Aorta (tissue), 5 donors: ENCODE measurements at regions of chr22 and their contacts with region 1.

Region 1: GRCh38 chr22:37686002-37686982 is at the start of gene NOL12:
- DNase-seq: peak; percentile 88 to 93
- ATAC-seq: peak; percentile 94
- H3K4me3 ChIP-seq: peak within 1 kb of the TSS; percentile 55 to 58
- H3K27ac ChIP-seq: peak within 1 kb of the TSS in 1 of 2 donors; percentile 46
- H3K4me1 ChIP-seq: no peaks in the 10 kb centered on the region
- H3K27me3 ChIP-seq: no peaks in the 10 kb centered on the region
- total RNA-seq, gene NOL12: 11.1 to 15.4 TPM

Region 2: DNA sequence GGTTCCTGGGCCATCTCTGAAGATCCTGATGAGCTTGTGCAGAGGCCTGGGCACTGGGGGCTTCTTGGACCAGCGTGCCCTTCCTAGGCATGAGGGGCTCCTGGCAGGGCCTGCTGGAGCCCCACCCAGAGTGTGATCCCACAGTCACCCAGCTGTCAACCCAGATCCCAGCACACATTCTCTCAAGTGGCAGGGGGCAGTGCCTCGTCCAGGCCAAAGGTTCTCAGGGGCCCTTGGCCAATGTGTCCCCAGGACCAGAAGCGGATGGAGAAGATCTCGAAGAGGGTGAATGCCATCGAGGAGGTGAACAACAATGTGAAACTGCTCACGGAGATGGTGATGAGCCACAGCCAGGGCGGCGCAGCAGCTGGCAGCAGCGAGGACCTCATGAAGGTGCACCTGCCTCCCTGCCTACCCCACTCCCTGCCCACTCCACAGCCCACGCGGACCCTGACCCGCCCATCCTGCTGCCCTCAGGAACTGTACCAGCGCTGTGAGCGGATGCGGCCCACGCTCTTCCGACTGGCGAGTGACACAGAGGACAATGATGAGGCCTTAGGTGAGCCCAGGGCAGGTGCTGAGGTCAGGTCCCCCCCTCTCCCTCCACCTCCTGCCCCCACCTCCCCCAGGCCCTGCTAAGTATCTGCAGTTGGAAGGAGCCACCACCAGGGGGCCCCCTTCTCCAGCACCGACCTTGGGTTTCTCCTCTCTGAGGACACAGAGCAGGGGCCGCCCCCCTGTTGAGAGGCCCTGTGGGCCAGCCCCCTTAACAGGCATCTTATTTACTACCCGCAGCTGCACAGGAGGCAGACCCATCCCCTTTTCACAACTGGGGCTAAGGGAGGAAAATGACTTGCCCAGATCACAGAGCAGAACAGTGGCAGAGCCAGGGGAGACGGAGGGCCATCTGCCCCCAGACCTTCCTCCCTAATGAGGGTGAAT is 62.9 kb before region 1 on chr22:
- intact Hi-C with region 1: loop called in 1 of 2 experiments (anchors 5 kb)
- DNase-seq: peak in 1 of 2 donors; percentile 90
- ATAC-seq: peak; percentile 68
- H3K4me3 ChIP-seq: no peak overlapping the region
- H3K27ac ChIP-seq: no peak overlapping the region
- H3K4me1 ChIP-seq: no peaks in the 10 kb centered on the region
- H3K27me3 ChIP-seq: no peaks in the 10 kb centered on the region

Region 3: GRCh38 chr22:37745548-37746365 is 59.5 kb after region 1 on chr22:
- intact Hi-C with region 1: loop called (anchors 5 kb)
- DNase-seq: peak; percentile 95 to 97
- ATAC-seq: peak; percentile 86
- H3K4me3 ChIP-seq: peak overlapping the region; percentile 87 to 88
- H3K27ac ChIP-seq: peak overlapping the region in 1 of 2 donors; percentile 60
- H3K4me1 ChIP-seq: no peaks in the 10 kb centered on the region
- H3K27me3 ChIP-seq: no peaks in the 10 kb centered on the region